ENCODE measurements at regions of chr3 and their contacts with region 1.

Region 1: DNA sequence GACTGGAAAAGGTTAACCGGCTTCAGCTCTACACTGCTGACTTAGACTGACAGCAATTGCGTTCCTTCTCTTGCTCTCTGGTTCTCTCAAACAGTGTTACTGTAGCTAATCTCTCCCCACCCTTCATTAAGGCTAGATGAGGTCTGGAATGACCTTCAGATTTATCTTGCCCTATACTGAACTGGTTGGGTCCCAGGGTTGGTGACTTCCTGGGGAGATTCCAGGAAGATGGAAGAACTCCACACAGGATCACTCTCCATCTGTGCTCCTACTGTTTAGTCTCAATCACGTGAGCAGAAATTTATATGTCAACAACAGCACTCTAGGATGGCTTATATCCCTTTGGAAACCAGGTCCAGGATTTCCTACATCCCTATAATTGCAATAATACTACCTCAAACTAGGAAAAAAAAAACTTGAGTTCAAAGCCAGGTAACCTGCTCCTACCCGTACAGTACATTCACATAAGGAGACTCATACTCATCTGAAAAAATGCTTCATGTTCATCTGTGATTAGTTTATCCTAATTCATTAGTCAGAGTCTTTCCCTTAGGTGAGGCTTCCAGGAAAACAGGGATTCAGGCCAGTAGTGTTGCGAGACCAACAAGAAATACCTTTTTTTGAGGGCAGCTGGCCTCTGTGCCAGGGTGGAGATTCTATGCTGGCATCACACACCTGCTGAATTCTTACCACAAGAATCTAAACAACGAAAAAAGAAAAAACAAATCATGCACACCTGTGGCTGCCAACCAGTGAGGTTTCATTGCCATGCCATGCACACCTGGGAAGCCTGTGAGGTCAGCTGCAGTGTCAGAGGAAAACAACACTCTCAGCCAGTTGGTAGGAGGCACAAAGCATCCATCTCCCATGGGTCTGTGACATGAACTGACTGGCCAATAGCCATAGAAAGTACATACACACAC is 297.3 kb downstream of the MECOM start:
- DNase-seq: no peak
- H3K4me3 ChIP-seq: no peak overlapping the region
- H3K27ac ChIP-seq: no peak overlapping the region
- H3K4me1 ChIP-seq: peaks cover 3% of the 10 kb centered on the region
- H3K27me3 ChIP-seq: no peaks in the 10 kb centered on the region
- CTCF ChIP-seq: no peak

Region 2: DNA sequence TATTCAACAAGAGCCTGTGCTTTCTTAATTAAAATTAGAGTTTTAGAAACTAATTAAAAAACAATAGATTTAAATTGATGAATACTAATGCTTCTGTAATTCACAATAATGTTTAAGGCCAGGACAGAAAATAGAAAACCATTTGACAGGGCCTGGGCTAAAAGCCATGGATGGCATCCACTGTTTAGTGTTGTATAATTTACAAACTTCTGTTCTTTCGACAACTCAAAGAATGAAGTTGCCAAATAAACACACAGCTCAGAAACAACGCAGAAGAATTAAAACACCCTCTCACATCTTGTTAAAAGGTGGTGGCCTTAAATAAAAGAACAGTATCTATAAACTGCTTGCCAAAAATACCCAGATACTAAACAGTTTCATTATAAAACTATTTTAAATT is 50.3 kb before region 1 on chr3:
- intact Hi-C with region 1: loop called (anchors 5 kb)
- DNase-seq: no peak
- H3K4me3 ChIP-seq: no peak overlapping the region
- H3K27ac ChIP-seq: no peak overlapping the region
- H3K4me1 ChIP-seq: no peaks in the 10 kb centered on the region
- H3K27me3 ChIP-seq: no peaks in the 10 kb centered on the region
- CTCF ChIP-seq: no peak